ENCODE measurements at regions of chr21 and their contacts with region 1.

Region 1: GRCh38 chr21:36749935-36750578 is 51.1 kb downstream of the SIM2 start:
- DNase-seq: no peak
- H3K4me3 ChIP-seq: no peak overlapping the region
- H3K27ac ChIP-seq: peak overlapping the region; percentile 17 to 42
- H3K4me1 ChIP-seq: no peaks in the 10 kb centered on the region
- H3K27me3 ChIP-seq: no peaks in the 10 kb centered on the region
- CTCF ChIP-seq: no peak
- POLR2A ChIP-seq: no peak

Region 2: GRCh38 chr21:36917471-36918158 is 167.6 kb after region 1 on chr21:
- intact Hi-C with region 1: loop called (anchors 5 kb)
- DNase-seq: peak; percentile 49
- H3K4me3 ChIP-seq: no peak overlapping the region
- H3K27ac ChIP-seq: peak overlapping the region; percentile 26 to 48
- H3K4me1 ChIP-seq: peaks cover 10% of the 10 kb centered on the region
- H3K27me3 ChIP-seq: no peaks in the 10 kb centered on the region
- CTCF ChIP-seq: peak in 3 of 4 experiments; percentile 48 to 74 (median 62)
- POLR2A ChIP-seq: no peak

Measured in prostate gland (tissue), 2 donors.